ENCODE measurements at regions of chr7 and their contacts with region 1.

Region 1: DNA sequence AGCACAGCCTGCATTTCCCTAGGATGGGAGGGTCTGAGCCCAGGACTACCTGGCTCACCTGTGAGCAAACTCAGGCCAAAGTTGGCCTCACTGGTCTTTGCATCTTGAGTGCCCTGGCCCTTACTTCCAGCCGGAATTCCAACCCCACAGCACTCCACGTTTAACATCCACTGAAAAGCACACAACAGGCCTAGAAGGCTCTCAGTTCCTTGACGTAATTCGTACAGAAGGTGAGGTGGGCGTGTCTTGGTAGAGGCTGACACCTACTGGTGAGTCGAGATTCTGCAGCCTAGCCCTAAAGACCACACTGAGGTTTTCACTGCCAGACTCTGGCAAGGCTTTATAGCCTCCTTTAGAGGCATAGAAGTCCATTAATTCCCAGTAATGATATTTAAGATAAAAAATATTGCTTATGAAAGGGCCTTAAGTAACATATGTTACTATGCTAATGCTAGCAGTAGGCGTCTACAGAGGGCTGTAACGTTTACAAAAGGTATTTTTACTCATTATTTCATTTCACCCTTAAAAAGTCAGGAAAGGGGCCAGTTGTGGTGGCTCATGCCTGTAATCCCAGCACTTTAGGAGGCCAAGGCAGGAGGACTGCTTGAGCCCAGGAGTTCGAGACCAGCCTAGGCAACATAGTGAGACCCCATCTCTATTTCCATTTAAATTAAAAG is 95.8 kb downstream of the HIP1 start:
- DNase-seq: peak; percentile 83
- ATAC-seq: peak; percentile 90
- H3K4me3 Mint-ChIP-seq: no peak overlapping the region
- H3K27ac Mint-ChIP-seq: no peak overlapping the region
- H3K4me1 Mint-ChIP-seq: peaks cover 8% of the 10 kb centered on the region
- H3K27me3 Mint-ChIP-seq: peaks cover 3% of the 10 kb centered on the region

Region 2: GRCh38 chr7:75072978-75073282 is 570.0 kb before region 1 on chr7:
- CTCF ChIA-PET with region 1: no interaction called
- POLR2A ChIA-PET with region 1: no interaction called
- intact Hi-C with region 1: loop called in 1 of 2 experiments (anchors 5 kb)
- DNase-seq: no peak
- ATAC-seq: peak; percentile 4
- H3K4me3 Mint-ChIP-seq: peak overlapping the region; percentile 95
- H3K27ac Mint-ChIP-seq: peak overlapping the region; percentile 90
- H3K4me1 Mint-ChIP-seq: peaks cover 11% of the 10 kb centered on the region
- H3K27me3 Mint-ChIP-seq: no peaks in the 10 kb centered on the region

Region 3: GRCh38 chr7:75531359-75531821 is 111.6 kb before region 1 on chr7:
- CTCF ChIA-PET with region 1: no interaction called
- POLR2A ChIA-PET with region 1: no interaction called
- intact Hi-C with region 1: loop called (anchors 5 to 10 kb)
- DNase-seq: no peak
- ATAC-seq: no peak
- H3K4me3 Mint-ChIP-seq: no peak overlapping the region
- H3K27ac Mint-ChIP-seq: no peak overlapping the region
- H3K4me1 Mint-ChIP-seq: peaks cover 18% of the 10 kb centered on the region
- H3K27me3 Mint-ChIP-seq: no peaks in the 10 kb centered on the region

Region 4: GRCh38 chr7:75599244-75599781 is 43.6 kb before region 1 on chr7:
- CTCF ChIA-PET with region 1: no interaction called
- POLR2A ChIA-PET with region 1: no interaction called
- intact Hi-C with region 1: loop called in 1 of 2 experiments (anchors 2 kb)
- DNase-seq: no peak
- ATAC-seq: no peak
- H3K4me3 Mint-ChIP-seq: no peak overlapping the region
- H3K27ac Mint-ChIP-seq: no peak overlapping the region
- H3K4me1 Mint-ChIP-seq: peaks cover 21% of the 10 kb centered on the region
- H3K27me3 Mint-ChIP-seq: no peaks in the 10 kb centered on the region

Measured in activated CD4-positive, alpha-beta T cell treated with anti-CD3 and anti-CD28 coated beads for 36 hours (primary cell).